ENCODE measurements at regions of chr11 and their contacts with region 1.

Region 1: DNA sequence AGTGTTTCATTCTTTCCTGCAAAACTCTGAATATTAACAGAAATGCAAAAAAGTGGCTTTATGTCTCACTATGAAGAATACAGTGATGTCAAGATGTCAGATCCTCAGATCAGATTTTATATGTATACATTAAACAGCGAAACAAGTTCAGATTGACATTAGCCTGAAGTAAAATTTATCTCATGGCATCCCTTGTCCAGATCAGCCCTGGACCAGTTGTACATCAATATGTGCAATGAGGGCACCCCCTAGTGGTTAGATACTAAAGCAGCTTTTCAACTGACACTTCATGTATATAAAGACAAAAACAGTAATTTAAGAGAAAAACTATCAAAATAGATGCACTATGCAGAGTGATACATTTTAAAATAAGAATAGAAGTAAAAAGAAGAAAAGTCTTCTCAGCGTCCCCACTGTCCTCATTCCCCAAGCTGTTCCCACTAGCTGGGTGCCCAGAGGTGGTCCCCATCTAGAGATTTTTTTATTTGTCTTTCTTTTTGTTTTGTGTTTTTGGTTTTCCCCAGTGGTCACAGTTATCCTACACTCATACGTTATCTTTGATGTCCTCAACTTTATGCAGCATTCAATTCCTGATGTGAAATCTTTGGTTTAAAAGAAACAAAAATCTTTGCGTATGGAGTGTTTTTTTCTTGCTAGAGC is 2193.4 kb upstream of the RAG2 start:
- DNase-seq: no peak
- ATAC-seq: peak; percentile 82
- H3K4me3 ChIP-seq: no peak overlapping the region
- H3K27ac ChIP-seq: no peak overlapping the region
- H3K4me1 ChIP-seq: no peaks in the 10 kb centered on the region
- H3K27me3 ChIP-seq: no peaks in the 10 kb centered on the region
- CTCF ChIP-seq: peak; percentile 71 to 73 (median 71)
- EP300 ChIP-seq: no peak
- POLR2A ChIP-seq: no peak
- RAD21 ChIP-seq: peak; percentile 82

Region 2: DNA sequence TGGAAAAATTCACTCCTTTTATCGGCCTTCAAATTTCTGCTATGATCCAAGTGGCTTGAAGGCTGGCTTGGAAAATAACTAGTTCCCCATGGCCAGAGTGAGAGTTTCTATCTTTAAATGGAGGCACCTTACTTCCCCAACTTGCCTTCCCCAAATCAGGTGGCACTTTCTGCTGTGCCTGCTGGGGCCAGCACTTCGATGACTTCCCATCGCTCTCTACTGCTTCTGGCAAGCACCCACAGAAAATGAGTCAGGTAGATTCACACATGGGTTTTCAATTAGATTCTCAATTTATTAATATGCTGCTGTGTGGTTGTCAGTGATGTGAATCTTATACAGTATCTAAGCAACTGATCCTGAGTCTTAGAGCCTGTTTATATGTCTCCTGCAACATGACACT is 1794.6 kb before region 1 on chr11:
- CTCF ChIA-PET with region 1: no interaction called
- POLR2A ChIA-PET with region 1: no interaction called
- RAD21 ChIA-PET with region 1: no interaction called
- SMC1A ChIA-PET with region 1: no interaction called
- in situ Hi-C with region 1: loop called (anchors 10 kb)
- intact Hi-C with region 1: loop called (anchors 5 kb)
- DNase-seq: no peak
- ATAC-seq: no peak
- H3K4me3 ChIP-seq: no peak overlapping the region
- H3K27ac ChIP-seq: no peak overlapping the region
- H3K4me1 ChIP-seq: no peaks in the 10 kb centered on the region
- H3K27me3 ChIP-seq: no peaks in the 10 kb centered on the region
- CTCF ChIP-seq: no peak
- EP300 ChIP-seq: no peak
- POLR2A ChIP-seq: no peak
- RAD21 ChIP-seq: no peak

Region 3: GRCh38 chr11:37002831-37003230 is 1788.6 kb before region 1 on chr11:
- CTCF ChIA-PET with region 1: interaction called, 7 read pairs
- POLR2A ChIA-PET with region 1: no interaction called
- RAD21 ChIA-PET with region 1: interaction called, 3 read pairs
- SMC1A ChIA-PET with region 1: no interaction called
- in situ Hi-C with region 1: loop called (anchors 10 kb)
- intact Hi-C with region 1: loop called (anchors 5 kb)
- DNase-seq: no peak
- ATAC-seq: no peak
- H3K4me3 ChIP-seq: no peak overlapping the region
- H3K27ac ChIP-seq: no peak overlapping the region
- H3K4me1 ChIP-seq: no peaks in the 10 kb centered on the region
- H3K27me3 ChIP-seq: no peaks in the 10 kb centered on the region
- CTCF ChIP-seq: no peak
- EP300 ChIP-seq: no peak
- POLR2A ChIP-seq: no peak
- RAD21 ChIP-seq: no peak

Region 4: DNA sequence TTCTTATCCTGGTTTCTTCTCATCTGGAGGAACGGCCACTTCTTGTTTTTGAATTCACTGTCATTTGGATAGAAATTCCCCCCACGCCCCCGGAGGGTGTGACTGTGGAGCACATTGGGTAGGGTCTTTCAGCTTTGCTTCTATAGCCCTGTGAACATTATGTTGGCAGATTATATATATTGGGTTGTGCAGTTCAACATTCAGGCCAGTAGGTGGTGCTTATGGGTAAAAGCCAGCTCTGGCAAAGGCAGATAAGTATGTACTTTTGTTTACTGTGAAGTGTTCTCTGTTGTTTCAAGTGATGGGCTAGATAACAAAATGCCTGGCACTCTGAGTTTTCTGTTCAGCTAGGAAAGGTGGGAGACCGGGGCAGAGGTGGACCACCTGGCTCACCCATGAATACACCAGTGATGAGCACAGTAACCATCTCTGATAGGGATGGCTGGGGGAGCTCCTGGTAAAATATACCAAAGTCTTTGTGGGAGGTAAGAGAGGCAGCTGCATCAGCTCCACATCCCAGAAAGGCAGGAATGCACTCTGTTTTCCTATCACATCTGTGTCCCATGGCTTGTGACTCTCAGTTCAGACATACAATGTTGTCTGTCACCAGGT is 845.2 kb before region 1 on chr11:
- CTCF ChIA-PET with region 1: interaction called, 23 read pairs
- POLR2A ChIA-PET with region 1: no interaction called
- RAD21 ChIA-PET with region 1: interaction called, 11 read pairs
- SMC1A ChIA-PET with region 1: interaction called, 15 read pairs
- in situ Hi-C with region 1: loop called (anchors 5 kb)
- intact Hi-C with region 1: loop called (anchors 2 kb)
- DNase-seq: peak; percentile 7
- ATAC-seq: peak; percentile 87
- H3K4me3 ChIP-seq: no peak overlapping the region
- H3K27ac ChIP-seq: no peak overlapping the region
- H3K4me1 ChIP-seq: no peaks in the 10 kb centered on the region
- H3K27me3 ChIP-seq: no peaks in the 10 kb centered on the region
- CTCF ChIP-seq: peak; percentile 61 to 68 (median 65)
- EP300 ChIP-seq: no peak
- POLR2A ChIP-seq: no peak
- RAD21 ChIP-seq: peak; percentile 40; the same call in 1 of the 2 replicates

Region 5: GRCh38 chr11:38019072-38019755 is 772.2 kb before region 1 on chr11:
- CTCF ChIA-PET with region 1: interaction called, 4 read pairs
- POLR2A ChIA-PET with region 1: no interaction called
- RAD21 ChIA-PET with region 1: no interaction called
- SMC1A ChIA-PET with region 1: no interaction called
- in situ Hi-C with region 1: no loop called
- intact Hi-C with region 1: loop called (anchors 2 kb)
- DNase-seq: no peak
- ATAC-seq: peak; percentile 24; the same call in 1 of the 3 replicates
- H3K4me3 ChIP-seq: no peak overlapping the region
- H3K27ac ChIP-seq: no peak overlapping the region
- H3K4me1 ChIP-seq: no peaks in the 10 kb centered on the region
- H3K27me3 ChIP-seq: no peaks in the 10 kb centered on the region
- CTCF ChIP-seq: no peak
- EP300 ChIP-seq: no peak
- POLR2A ChIP-seq: no peak
- RAD21 ChIP-seq: no peak

Region 6: GRCh38 chr11:38646382-38646781 is 145.1 kb before region 1 on chr11:
- CTCF ChIA-PET with region 1: no interaction called
- POLR2A ChIA-PET with region 1: no interaction called
- RAD21 ChIA-PET with region 1: no interaction called
- SMC1A ChIA-PET with region 1: no interaction called
- in situ Hi-C with region 1: no loop called
- intact Hi-C with region 1: no loop called
- DNase-seq: no peak
- ATAC-seq: no peak
- H3K4me3 ChIP-seq: no peak overlapping the region
- H3K27ac ChIP-seq: no peak overlapping the region
- H3K4me1 ChIP-seq: no peaks in the 10 kb centered on the region
- H3K27me3 ChIP-seq: no peaks in the 10 kb centered on the region
- CTCF ChIP-seq: no peak
- EP300 ChIP-seq: no peak
- POLR2A ChIP-seq: no peak
- RAD21 ChIP-seq: no peak

Measured in GM12878 (cell line).